ENCODE measurements at regions of chr19 and their contacts with region 1.

Region 1: GRCh38 chr19:53537480-53538383 is at the start of gene ZNF331:
- DNase-seq: peak; percentile 82
- H3K4me3 Mint-ChIP-seq: peak within 1 kb of the TSS; percentile 96
- H3K27ac Mint-ChIP-seq: peak within 1 kb of the TSS; percentile 97
- H3K4me1 Mint-ChIP-seq: peaks cover 6% of the 10 kb centered on the region
- H3K27me3 Mint-ChIP-seq: no peaks in the 10 kb centered on the region
- total RNA-seq, gene ZNF331: 15.7 and 18.3 TPM in 2 replicates

Region 2: GRCh38 chr19:53553884-53554791 is 16.4 kb after region 1 on chr19:
- intact Hi-C with region 1: loop called (anchors 1 kb)
- DNase-seq: peak; percentile 86
- H3K4me3 Mint-ChIP-seq: peak overlapping the region; percentile 89
- H3K27ac Mint-ChIP-seq: peak overlapping the region; percentile 94
- H3K4me1 Mint-ChIP-seq: peaks cover 16% of the 10 kb centered on the region
- H3K27me3 Mint-ChIP-seq: no peaks in the 10 kb centered on the region

Region 3: DNA sequence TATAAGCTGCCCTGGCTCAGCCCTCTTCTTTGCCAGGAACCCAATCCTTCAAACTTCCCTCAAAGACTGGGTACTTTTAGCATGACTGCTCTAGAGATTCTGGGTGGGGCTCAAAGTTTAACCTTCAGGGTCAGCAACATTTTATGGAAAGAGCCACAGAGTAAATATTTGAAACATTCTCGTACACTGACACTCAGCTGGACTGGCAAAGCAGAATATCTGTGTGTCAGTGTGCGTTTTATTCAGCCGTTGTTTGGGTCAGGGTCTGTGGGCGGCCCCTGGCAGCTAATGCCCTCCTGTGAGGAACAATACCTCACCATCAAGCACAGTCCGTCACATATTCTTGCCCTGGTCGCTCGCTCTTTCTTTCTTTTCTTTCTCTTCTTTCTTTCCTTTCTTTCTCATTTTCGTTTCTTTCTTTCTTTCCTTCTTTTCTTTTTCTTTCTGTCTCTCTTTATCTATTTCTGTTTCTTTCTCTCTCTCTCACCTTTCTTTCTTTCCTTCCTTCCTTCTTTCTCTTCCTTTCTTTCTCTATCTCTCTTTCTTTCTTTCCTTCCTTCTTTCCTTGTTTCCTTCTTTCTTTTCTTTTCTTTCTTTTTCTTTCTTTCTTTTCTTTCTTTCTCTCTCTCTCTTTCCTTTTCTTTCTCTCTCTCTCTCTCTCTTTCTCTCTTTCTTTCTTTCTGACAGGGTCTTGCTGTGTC is 104.8 kb after region 1 on chr19:
- intact Hi-C with region 1: no loop called
- DNase-seq: no peak
- H3K4me3 Mint-ChIP-seq: no peak overlapping the region
- H3K27ac Mint-ChIP-seq: no peak overlapping the region
- H3K4me1 Mint-ChIP-seq: no peaks in the 10 kb centered on the region
- H3K27me3 Mint-ChIP-seq: no peaks in the 10 kb centered on the region

Measured in activated T-helper 2 cell treated with anti-CD3 and anti-CD28 coated beads, Interferon-gamma antibody, Interleukin-2, Interleukin-4, amounts not matched to agents 10 μg/mL and 5 μg/mL and 100 μg/mL, durations not matched to agents 14 hours and 24 hours and 36 hours (primary cell).